OCI-LY7 (cell line): ENCODE measurements at regions of chr2 and their contacts with region 1.

Region 1: DNA sequence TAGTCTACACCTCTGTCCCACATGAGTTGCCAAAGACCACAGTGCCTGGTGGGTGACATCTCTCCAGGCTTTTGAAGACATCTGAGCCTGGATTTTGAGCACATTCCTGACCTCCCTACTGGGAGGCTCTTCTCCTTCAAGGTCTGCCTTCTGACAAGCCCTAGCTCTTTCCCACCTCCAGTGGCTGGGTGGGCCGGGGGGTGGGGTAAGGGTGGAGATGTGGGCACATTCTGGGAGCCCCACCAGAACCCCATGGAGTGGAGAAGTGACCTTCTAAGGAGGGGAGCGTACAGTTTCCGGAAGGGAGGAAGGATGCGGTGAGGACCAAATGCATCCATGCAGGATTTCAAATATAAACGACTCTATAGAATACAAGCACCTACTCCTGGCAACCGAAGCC is 27.9 kb upstream of the ANXA4 start:
- DNase-seq: no peak
- H3K4me3 ChIP-seq: no peak overlapping the region
- H3K27ac ChIP-seq: no peak overlapping the region
- H3K4me1 ChIP-seq: no peaks in the 10 kb centered on the region
- CTCF ChIP-seq: no peak

Region 2: DNA sequence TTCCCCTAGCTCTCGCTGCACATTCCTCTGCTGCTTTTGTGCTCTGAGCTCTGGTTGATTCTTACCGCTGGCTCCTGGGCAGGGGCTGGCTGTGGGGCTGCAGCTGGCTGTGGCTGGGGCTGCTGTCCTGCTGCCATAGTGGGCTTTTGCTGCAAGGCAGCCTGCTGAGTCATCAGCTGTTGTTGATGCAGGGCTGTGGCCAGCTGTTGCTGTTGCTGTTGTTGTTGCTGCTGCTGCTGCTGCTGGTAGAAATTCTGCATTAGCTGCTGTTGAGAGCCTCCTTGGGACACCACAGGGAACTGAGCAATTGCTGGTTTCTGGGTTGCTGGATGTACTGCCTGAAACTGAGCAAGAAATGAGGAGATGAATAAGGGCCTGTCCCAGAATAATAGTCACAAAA is 199.6 kb before region 1 on chr2:
- CTCF ChIA-PET with region 1: no interaction called
- POLR2A ChIA-PET with region 1: no interaction called
- intact Hi-C with region 1: no loop called
- DNase-seq: no peak
- H3K4me3 ChIP-seq: no peak overlapping the region
- H3K27ac ChIP-seq: no peak overlapping the region
- H3K4me1 ChIP-seq: no peaks in the 10 kb centered on the region
- CTCF ChIP-seq: no peak

Region 3: GRCh38 chr2:69559442-69560146 is 154.4 kb before region 1 on chr2:
- CTCF ChIA-PET with region 1: no interaction called
- POLR2A ChIA-PET with region 1: no interaction called
- intact Hi-C with region 1: loop called (anchors 1 kb)
- DNase-seq: peak; percentile 56
- H3K4me3 ChIP-seq: no peak overlapping the region
- H3K27ac ChIP-seq: no peak overlapping the region
- H3K4me1 ChIP-seq: no peaks in the 10 kb centered on the region
- CTCF ChIP-seq: peak; percentile 83

Region 4: DNA sequence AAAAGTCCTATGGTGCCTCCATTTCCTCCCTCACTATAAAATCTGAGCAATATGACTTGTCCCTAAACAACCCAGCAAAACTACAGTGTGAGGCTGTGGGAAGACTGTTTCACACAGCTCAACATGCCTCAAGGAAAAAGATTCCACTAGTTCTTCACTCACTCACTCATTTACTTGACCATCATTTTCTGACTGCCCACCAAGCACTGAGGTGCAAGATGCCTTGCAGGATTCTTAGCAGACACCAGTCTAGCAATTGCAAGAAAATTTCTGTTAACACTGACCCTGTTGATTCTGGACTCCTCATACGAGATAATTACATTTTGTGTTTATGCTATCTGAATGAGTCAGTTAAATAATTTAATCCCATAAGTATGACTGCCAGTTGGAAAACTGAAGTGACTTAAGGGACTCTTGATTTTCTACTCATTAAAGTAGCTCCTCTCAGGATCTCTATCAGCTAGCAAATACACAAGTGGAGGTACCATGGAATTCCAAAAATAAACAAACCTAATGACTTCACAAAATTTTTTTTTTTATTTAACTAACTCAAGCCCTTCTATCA is 321.4 kb after region 1 on chr2:
- CTCF ChIA-PET with region 1: no interaction called
- POLR2A ChIA-PET with region 1: no interaction called
- intact Hi-C with region 1: no loop called
- DNase-seq: no peak
- H3K4me3 ChIP-seq: no peak overlapping the region
- H3K27ac ChIP-seq: no peak overlapping the region
- H3K4me1 ChIP-seq: no peaks in the 10 kb centered on the region
- CTCF ChIP-seq: no peak